ENCODE measurements at regions of chr9 and their contacts with region 1.

Region 1: DNA sequence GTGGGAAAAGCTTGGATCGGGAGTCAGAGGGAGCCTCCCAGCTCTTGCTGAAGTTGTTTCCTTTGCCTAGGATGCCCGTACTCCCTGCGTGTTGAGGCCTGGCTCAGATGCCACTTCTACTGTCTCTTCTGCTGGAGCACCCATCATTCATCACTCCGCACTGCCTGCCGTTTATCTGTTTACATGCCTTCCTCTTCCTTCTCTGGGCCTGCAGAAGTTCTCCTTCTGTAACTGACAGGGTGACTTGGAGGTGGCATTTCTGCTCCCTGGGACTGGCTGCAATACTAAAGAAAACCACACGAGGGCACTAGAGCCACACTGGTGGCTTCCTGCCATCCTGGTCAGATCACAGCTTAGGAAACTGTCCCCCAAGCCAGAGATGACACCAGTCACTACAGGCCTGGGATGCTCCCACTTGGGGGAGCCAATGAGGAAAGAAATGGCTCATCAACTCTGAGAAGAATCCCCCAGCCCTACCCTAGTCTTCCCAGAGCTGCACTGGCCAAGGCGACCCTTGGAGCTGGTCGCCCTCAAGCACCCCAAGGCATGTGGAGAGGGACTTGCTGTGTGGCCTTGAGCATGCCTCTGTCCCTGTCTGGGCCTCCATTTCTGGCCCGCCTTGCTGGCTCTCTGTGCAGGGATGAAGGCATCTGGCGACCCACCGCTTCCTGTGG is 9.7 kb upstream of the SLC25A51 start:
- DNase-seq: peak; percentile 91 to 95 (median 93)
- ATAC-seq: peak; percentile 95
- H3K4me3 ChIP-seq: no peak overlapping the region
- H3K27ac ChIP-seq: no peak overlapping the region
- H3K4me1 ChIP-seq: peaks cover 0 to 10% of the 10 kb centered on the region in 2 experiments; a peak in 3 of 5 replicates
- H3K27me3 ChIP-seq: no peaks in the 10 kb centered on the region
- CTCF ChIP-seq: peak; percentile 98 to 100 (median 99)
- EP300 ChIP-seq: no peak
- POLR2A ChIP-seq: no peak
- RAD21 ChIP-seq: peak; percentile 100

Region 2: GRCh38 chr9:38074441-38074961 is 160.9 kb after region 1 on chr9:
- CTCF ChIA-PET with region 1: interaction called, 19 read pairs
- POLR2A ChIA-PET with region 1: no interaction called
- in situ Hi-C with region 1: loop called (anchors 5 kb)
- intact Hi-C with region 1: no loop called
- DNase-seq: no peak
- ATAC-seq: no peak
- H3K4me3 ChIP-seq: no peak overlapping the region
- H3K27ac ChIP-seq: no peak overlapping the region
- H3K4me1 ChIP-seq: peaks cover 10 to 15% of the 10 kb centered on the region in 2 experiments
- H3K27me3 ChIP-seq: peaks cover 0 to 4% of the 10 kb centered on the region in 2 experiments; a peak in 3 of 5 replicates
- CTCF ChIP-seq: no peak
- EP300 ChIP-seq: no peak
- POLR2A ChIP-seq: no peak
- RAD21 ChIP-seq: no peak

Region 3: DNA sequence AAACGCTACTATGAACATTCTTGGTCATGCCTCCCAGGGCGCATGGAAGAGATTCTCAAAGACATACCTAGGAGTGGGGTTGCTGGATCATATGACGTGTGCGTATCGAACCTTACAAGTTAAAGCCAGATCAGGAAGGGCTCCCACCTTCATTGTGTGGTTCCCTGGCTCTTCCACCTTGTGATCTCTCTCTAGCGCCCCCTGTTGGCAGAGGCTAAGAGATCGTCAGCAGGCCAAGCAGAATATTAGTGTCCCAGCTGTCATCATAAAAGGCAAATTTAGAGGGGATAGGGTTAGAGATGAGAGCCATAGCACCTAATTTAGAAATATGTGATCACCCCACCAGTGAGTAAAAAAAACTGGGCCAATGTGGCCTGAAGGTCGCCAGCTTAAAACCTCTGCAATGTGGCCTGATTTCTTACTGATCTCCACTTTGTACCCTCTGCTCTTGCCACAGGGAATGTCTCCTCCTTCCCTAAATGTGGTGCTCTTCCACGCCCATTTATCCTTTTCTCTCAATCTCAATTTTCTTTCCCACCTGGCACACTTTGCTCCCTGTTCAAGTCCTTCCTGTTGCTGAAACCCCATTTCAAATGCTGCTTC is 247.1 kb after region 1 on chr9:
- CTCF ChIA-PET with region 1: interaction called, 10 read pairs
- POLR2A ChIA-PET with region 1: no interaction called
- in situ Hi-C with region 1: loop called (anchors 5 kb)
- intact Hi-C with region 1: loop called (anchors 1 kb)
- DNase-seq: peak; percentile 79 to 89 (median 86)
- ATAC-seq: peak; percentile 94
- H3K4me3 ChIP-seq: no peak overlapping the region
- H3K27ac ChIP-seq: no peak overlapping the region
- H3K4me1 ChIP-seq: no peaks in the 10 kb centered on the region
- H3K27me3 ChIP-seq: peaks cover 4 to 26% of the 10 kb centered on the region in 2 experiments; a peak in 4 of 5 replicates
- CTCF ChIP-seq: peak; percentile 88 to 92 (median 91)
- EP300 ChIP-seq: no peak
- POLR2A ChIP-seq: no peak
- RAD21 ChIP-seq: peak; percentile 75 to 82

Region 4: DNA sequence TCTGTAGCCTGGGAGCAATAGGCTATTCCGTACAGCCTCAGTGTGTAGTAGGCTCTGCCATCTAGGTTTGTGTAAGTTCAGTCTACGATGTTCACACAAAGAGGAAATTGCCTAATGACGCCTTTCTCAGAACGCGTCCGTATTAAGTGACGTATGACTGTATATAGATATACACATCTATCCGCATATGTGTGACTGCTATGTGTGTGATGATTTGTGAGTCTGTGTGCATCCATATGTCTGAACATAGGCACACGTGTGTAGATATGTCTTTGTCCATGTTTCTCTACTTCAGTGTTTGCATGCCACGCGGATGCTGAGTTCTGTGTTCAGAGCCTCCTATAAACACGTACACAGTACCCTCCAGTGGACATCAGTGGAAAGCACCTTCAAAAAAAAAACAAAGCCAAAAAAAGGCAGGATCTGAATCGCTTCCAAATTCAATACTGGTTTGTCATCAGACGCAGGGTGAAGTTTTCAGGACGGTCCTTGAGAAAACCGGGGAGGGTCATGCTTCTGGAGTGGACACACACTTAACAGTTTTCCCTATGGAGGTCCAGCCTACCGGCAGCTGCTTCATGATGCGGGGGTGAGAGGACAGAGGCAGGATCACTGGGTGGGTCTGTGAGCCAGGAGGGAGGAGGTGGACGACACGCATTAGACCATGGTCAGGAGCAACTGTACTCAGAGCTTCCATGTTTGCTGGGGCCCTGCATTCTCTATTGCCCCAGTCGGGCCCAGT is 449.4 kb after region 1 on chr9:
- CTCF ChIA-PET with region 1: interaction called, 20 read pairs
- POLR2A ChIA-PET with region 1: no interaction called
- in situ Hi-C with region 1: loop called (anchors 5 kb)
- intact Hi-C with region 1: loop called (anchors 1 kb)
- DNase-seq: peak; percentile 25 to 62 (median 46)
- ATAC-seq: peak; percentile 82
- H3K4me3 ChIP-seq: no peak overlapping the region
- H3K27ac ChIP-seq: no peak overlapping the region
- H3K4me1 ChIP-seq: peaks cover 0 to 4% of the 10 kb centered on the region in 2 experiments; a peak in 2 of 5 replicates
- H3K27me3 ChIP-seq: peaks cover 16 to 27% of the 10 kb centered on the region in 2 experiments
- CTCF ChIP-seq: peak; percentile 69 to 91 (median 86)
- EP300 ChIP-seq: no peak
- POLR2A ChIP-seq: no peak
- RAD21 ChIP-seq: peak; percentile 83 to 88